Spleen (tissue), 13 donors: ENCODE measurements at regions of chr17 and their contacts with region 1.

Region 1: GRCh38 chr17:31357831-31358394 is 33.6 kb upstream of the RAB11FIP4 start:
- DNase-seq: no peak
- H3K4me3 ChIP-seq: no peak overlapping the region
- H3K27ac ChIP-seq: no peak overlapping the region
- H3K4me1 ChIP-seq: no peaks in the 10 kb centered on the region
- H3K27me3 ChIP-seq: no peaks in the 10 kb centered on the region
- CTCF ChIP-seq: no peak
- POLR2A ChIP-seq: no peak

Region 2: GRCh38 chr17:31269578-31269983 is 88.3 kb before region 1 on chr17:
- intact Hi-C with region 1: loop called (anchors 10 kb)
- DNase-seq: no peak
- H3K4me3 ChIP-seq: no peak overlapping the region
- H3K27ac ChIP-seq: no peak overlapping the region
- H3K4me1 ChIP-seq: peaks cover 0 to 9% (median under 1%) of the 10 kb centered on the region in 6 donors
- H3K27me3 ChIP-seq: no peaks in the 10 kb centered on the region
- CTCF ChIP-seq: no peak
- POLR2A ChIP-seq: no peak